HEK293 (cell line): ENCODE measurements at regions of chr19 and their contacts with region 1.

Region 1: DNA sequence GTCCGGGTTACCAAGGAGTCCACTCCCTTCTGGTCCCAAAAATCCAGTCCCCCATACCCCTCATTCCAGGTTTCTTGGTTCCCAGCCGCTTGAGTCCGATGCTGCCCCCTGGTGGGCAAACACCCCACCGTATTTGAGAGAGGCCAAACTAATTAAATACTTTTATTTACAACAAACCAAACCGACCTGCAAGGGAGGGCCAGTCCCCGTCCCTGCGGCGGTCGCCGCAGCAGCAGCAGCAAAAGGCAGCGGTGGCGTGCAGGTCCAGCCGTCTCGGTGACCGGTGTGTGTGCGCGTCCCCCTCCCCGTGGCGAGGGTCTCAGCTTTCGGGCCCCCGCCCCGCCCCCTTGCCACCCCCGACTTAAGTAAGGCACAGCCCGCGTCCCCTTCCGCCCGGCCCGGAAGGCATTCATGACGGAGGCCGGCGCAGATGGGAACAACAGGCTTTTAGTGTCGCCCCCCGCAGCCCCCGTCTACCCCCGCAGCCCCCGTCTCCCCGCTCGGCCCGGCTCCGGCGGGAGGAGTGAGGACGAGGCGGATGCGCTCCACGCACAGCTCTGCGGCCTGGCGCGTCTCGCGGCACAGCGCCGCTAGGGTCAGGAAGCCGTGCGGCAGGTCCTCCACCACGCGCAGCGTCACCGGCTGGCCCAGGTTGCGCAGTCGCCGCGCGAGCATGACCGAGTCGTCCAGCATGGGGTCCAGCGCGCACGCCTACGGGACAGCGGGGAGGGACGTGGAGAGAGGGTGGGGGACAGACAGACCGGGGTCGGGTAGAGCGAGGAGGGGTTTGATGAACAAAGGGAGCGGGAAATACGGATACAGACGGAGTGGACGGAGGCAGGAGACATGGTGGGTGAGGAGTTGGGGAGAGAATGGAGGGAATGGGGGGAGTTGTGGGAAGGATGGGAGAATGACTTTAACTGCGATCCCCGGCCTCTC is 11.5 kb upstream of the CNFN start:
- H3K4me3 ChIP-seq: peak overlapping the region; percentile 49
- H3K27ac ChIP-seq: peak overlapping the region; percentile 50; the same call in 1 of the 2 replicates
- H3K4me1 ChIP-seq: peaks cover 12% of the 10 kb centered on the region
- CTCF ChIP-seq: peak; percentile 76

Region 2: DNA sequence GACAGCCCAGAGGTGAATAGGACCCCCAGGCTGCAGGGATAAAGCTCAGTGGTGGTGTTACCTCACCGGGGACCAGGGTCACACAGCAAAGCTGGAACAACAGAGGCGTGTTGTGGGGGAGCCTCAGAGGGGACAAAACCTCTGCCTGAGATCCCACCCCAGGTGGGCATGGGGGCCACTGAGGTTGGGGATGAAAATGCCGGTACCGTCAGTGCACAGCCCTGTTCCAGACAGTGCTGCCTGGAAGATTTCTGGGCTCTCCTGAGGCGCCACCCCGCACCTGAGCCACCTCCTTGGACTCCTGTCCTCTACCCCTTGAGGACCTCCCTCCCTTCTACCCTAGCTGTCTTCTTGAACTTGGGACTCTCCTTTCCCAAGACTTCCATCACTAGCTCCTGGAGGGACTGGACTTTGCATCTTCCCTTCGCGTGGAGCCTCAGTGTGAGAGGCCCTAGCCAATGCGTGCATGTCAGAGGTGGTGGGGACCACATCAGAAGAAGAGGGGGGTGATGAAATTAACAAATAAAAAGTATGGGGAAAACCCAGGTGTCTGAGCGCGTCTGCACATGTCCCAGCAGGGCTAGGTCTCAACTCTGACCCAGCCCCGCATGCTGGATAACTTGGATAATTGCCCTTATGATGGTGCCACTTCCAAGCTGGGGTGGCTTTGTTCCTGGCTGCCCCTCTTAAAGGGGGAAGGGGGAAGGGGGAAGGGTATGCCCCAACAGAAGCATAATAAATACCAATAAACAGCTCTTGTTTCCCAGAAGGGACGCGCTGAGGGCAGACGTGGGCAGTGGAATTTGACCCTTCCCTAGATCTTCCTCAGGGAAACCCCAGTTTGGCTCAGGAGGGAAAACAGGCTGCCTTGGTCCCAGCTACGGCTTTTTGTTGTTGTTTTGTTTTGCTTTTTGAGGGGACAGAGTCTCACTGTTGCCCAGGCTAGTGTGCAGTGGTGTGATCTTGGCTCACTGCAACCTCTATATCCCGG is 23.1 kb before region 1 on chr19:
- CTCF ChIA-PET with region 1: interaction called, 10 read pairs
- POLR2A ChIA-PET with region 1: interaction called, 41 read pairs
- H3K4me3 ChIP-seq: no peak overlapping the region
- H3K27ac ChIP-seq: no peak overlapping the region
- H3K4me1 ChIP-seq: no peaks in the 10 kb centered on the region
- CTCF ChIP-seq: no peak

Region 3: DNA sequence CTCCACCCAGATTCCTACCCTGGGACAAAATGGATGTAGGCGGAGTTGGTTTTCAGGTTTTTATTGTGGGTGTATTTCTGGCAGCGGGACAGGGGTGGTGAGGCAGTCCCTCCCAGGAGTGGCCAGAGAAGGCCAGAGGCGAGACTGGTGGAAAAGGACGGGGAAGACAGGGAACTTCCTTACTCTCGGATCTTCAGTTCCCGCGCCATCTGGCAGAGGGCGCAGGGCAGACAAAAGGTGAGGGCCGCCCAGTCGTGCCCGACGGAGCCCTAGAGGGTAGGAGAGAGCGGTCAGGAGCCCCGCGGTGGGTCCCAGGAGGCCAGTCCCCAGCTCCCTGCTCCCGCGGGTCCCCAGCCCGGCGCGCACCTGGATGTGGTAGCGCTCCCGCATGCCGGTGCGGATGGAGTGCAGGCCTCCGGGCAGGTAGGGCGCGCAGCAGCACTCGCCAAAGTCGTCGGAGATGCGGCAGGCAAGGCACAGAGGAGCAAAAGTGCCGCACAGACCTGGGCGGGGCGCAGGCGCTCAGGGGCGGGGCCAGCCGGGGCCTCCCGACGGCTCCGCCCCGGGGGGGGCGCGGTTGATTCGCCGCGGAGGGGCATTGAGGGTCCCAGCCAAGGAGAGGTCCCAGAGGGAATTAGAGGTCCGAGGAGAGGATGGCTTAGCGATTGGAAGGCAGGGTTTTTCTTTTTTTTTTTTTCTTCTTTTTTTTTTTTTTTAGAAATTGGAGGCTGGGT is 14.5 kb before region 1 on chr19:
- CTCF ChIA-PET with region 1: interaction called, 33 read pairs
- POLR2A ChIA-PET with region 1: interaction called, 41 read pairs
- H3K4me3 ChIP-seq: peak overlapping the region; percentile 33
- H3K27ac ChIP-seq: peak overlapping the region; percentile 44; the same call in 1 of the 2 replicates
- H3K4me1 ChIP-seq: peaks cover 4% of the 10 kb centered on the region; the same call in 1 of the 2 replicates
- CTCF ChIP-seq: peak; percentile 99

Region 4: DNA sequence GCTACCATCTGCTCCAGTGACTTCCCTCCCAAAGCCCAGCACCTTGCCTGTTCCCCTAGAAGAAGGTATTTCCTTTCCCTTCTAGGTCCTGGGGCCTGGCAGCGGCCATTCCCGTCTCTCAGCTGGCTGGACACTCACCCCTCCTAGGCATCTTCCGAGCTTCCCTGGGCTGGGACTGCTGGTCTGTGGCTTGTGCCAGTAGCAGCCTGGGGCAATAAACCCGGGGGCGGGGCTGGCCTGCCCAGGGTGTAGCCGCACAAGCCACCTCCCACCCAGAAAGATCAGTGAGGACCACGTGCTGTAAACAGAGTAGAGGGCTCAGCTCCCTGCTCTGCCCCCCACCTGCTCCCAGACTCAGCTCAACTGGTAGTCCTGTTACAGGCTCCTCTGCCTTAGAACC is 10.6 kb after region 1 on chr19:
- CTCF ChIA-PET with region 1: interaction called, 12 read pairs
- POLR2A ChIA-PET with region 1: interaction called, 19 read pairs
- H3K4me3 ChIP-seq: no peak overlapping the region
- H3K27ac ChIP-seq: peak overlapping the region; percentile 11; the same call in 1 of the 2 replicates
- H3K4me1 ChIP-seq: peaks cover 8% of the 10 kb centered on the region
- CTCF ChIP-seq: no peak

Region 5: GRCh38 chr19:42433503-42434260 is 32.0 kb after region 1 on chr19:
- CTCF ChIA-PET with region 1: interaction called, 17 read pairs
- POLR2A ChIA-PET with region 1: no interaction called
- H3K4me3 ChIP-seq: no peak overlapping the region
- H3K27ac ChIP-seq: no peak overlapping the region
- H3K4me1 ChIP-seq: peaks cover 5% of the 10 kb centered on the region; the same call in 1 of the 2 replicates
- CTCF ChIP-seq: peak; percentile 53; the same call in 1 of the 2 replicates